CD4-positive, alpha-beta T cell (primary cell): ENCODE measurements at regions of chr14 and their contacts with region 1.

Region 1: DNA sequence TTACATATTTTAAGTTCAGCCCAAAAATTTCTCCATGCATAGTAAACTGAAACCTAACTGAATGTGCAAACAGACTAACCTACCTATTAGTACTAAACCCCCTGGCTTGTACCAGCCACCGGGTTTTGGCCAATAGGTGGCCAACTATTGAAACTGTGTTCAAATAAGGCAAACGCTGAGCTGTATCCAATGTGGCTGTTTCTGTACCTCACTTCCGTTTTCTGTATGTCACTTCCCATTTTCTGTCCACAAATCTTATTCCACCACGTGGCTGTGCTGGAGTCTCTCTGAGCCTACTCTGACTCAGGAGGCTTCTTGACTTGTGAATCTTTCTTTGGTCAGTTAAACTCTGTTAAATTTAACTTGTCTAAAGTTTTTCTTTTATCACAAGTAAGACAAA is 6.0 kb upstream of the FBXO34 start:
- DNase-seq: peak in 2 of 14 experiments; percentile 53 to 66
- ATAC-seq: peak; percentile 34
- H3K4me3 ChIP-seq: no peak overlapping the region
- H3K4me3 Mint-ChIP-seq: no peak overlapping the region
- H3K27ac ChIP-seq: no peak overlapping the region
- H3K27ac Mint-ChIP-seq: no peak overlapping the region
- H3K4me1 ChIP-seq: no peaks in the 10 kb centered on the region
- H3K4me1 Mint-ChIP-seq: peaks cover under 1% of the 10 kb centered on the region
- H3K27me3 ChIP-seq: no peaks in the 10 kb centered on the region
- H3K27me3 Mint-ChIP-seq: no peaks in the 10 kb centered on the region
- CTCF ChIP-seq: no peak

Region 2: DNA sequence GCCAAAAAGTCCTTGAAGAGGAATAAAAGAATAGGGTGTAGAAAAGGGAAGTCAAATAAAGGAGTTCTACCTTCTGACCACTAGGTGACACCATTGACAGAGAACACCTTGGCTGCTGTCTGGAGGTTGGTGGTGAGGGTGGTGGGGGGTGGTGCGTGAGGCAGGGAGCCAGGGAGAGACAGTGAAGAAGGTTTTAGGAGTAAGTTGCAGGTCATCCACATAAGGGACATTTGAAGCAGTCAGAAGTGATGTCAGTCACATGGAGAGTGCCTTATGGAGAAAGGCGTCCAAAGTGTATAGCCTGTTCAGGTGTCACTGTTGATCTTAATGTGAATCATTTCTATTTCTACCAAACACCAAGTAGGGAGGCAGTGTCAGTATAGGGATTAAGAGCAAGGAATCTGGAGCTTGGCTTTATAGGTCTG is 1832.8 kb before region 1 on chr14:
- CTCF ChIA-PET with region 1: no interaction called
- POLR2A ChIA-PET with region 1: no interaction called
- intact Hi-C with region 1: no loop called
- DNase-seq: peak in 1 of 14 experiments; percentile 1
- ATAC-seq: no peak
- H3K4me3 ChIP-seq: no peak overlapping the region
- H3K4me3 Mint-ChIP-seq: no peak overlapping the region
- H3K27ac ChIP-seq: no peak overlapping the region
- H3K27ac Mint-ChIP-seq: no peak overlapping the region
- H3K4me1 ChIP-seq: no peaks in the 10 kb centered on the region
- H3K4me1 Mint-ChIP-seq: no peaks in the 10 kb centered on the region
- H3K27me3 ChIP-seq: no peaks in the 10 kb centered on the region
- H3K27me3 Mint-ChIP-seq: no peaks in the 10 kb centered on the region
- CTCF ChIP-seq: no peak

Region 3: DNA sequence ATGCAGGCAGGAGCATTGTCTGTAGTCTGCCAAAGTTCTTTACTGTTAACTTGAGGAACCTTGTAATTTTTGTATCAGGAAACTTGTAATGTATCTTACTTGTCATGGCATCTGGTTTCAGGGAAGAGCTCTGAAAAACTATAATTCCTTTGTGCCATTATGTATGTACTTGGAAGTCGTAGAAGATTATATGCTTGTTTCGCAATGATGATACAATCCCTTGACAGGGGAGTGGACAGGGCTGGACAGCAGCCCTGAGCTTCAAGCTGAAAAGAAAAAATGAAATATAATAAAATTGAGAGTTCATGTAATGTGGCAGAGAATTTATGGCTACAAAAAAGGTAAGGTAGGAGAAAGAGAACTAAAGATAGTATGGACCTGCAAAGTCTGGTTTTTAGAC is 66.4 kb before region 1 on chr14:
- CTCF ChIA-PET with region 1: no interaction called
- POLR2A ChIA-PET with region 1: no interaction called
- intact Hi-C with region 1: loop called in 1 of 2 experiments (anchors 5 kb)
- DNase-seq: no peak
- ATAC-seq: no peak
- H3K4me3 ChIP-seq: no peak overlapping the region
- H3K4me3 Mint-ChIP-seq: no peak overlapping the region
- H3K27ac ChIP-seq: no peak overlapping the region
- H3K27ac Mint-ChIP-seq: no peak overlapping the region
- H3K4me1 ChIP-seq: no peaks in the 10 kb centered on the region
- H3K4me1 Mint-ChIP-seq: no peaks in the 10 kb centered on the region
- H3K27me3 ChIP-seq: no peaks in the 10 kb centered on the region
- H3K27me3 Mint-ChIP-seq: no peaks in the 10 kb centered on the region
- CTCF ChIP-seq: no peak